ENCODE measurements at regions of chr1 and their contacts with region 1.

Region 1: DNA sequence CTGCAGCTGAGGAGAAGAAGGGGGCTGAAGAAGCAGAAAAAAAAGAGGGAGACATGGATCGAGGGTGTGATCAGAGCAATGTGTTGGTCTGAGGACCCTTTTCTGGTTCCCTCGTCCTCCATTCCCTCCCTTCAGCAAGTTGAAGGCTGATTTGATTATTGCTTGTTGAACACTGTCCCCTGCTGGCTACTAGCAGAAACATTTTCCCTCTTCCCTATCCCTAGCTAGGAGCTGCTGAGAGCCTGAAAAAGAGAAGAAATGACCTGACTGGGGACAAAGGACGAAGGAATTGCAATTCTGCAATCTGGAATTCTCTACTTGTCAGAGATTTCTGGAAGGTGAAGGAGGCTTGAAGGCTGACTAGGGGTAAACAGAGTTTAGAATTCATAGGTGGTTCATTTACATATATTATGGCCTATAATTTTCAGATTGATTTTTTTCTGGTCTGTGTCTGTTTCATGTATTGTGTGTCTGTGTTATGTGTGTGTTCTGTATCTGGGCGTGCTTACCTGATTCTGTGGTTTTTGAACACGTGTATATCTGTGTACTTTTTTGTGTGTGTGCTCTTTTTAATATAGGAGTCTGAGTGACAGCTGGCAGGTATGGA is 9.8 kb downstream of the NHLH1 start:
- DNase-seq: peak in 2 of 10 donors; percentile 53 to 57

Region 2: DNA sequence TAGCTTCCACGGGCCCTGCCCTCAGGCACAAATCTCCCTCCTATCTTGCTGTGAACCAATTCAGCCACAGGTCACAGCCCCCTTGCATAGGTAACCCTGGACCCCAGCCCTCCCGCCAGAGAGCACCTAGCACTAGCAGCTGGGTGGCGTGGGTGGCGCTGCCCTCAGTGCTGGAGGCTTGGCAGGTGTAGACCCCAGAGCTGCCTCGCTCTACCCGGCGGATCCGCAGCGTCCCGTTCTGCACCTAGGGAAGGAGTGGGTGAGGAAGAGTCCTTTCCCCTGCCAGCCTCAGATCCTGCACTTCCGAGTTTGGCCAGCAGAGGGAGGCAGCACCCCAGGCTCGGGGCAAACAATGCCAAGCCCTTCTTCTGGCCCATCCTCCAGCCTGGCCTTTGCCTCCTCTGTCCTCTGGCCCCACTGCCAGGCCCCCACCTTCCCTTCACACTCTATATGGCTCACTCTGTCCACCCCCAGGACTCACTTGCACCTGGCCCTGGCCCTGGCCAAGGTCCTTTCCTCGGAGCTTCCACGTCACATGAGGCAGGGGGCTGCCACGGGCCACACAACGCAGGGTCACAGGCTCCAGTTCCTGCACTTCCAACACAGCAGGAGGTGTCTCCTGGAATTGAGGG is 440.2 kb before region 1 on chr1:
- intact Hi-C with region 1: loop called (anchors 10 kb)
- DNase-seq: peak in 7 of 10 donors; percentile 44 to 93 (median 74)

Region 3: GRCh38 chr1:160101037-160101716 is 275.5 kb before region 1 on chr1:
- intact Hi-C with region 1: loop called (anchors 5 kb)
- DNase-seq: peak; percentile 83 to 98 (median 90)

Region 4: DNA sequence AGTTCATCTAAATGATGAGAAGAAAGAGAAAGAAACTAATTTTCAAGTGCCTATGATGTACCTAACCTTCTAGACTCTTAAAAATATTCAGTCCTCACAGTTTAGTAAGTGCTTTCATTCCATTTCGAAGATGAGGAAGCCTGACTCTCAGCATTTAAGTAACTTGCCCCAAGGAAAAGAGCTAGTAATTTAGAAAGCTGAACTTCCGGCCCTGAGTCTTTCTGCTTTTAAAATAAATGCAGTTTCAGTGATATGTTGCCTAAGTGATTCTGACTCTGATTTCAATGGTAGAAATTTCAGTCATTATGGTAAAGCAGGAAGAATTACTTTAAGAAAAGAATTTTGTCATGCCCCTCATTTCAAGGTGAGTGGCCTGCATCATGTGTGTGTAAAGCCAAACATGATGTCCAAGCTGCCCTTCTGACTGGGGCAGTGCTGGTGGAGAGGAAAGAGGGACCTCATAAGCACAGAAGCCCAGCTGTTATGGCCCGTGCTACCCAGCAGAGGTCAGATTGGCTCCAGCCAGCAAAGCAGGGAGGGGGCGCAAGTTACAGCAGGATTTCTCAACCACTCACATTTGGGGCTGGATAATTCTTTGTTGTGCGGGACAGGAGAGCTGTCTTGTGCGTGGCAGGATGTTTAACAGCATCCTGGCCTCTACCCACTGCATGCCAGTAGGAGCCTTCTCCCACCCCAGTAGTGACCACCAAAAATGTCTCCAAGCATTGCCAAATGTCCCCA is 214.5 kb before region 1 on chr1:
- intact Hi-C with region 1: no loop called
- DNase-seq: peak in 5 of 10 donors; percentile 43 to 87 (median 53)

Region 5: DNA sequence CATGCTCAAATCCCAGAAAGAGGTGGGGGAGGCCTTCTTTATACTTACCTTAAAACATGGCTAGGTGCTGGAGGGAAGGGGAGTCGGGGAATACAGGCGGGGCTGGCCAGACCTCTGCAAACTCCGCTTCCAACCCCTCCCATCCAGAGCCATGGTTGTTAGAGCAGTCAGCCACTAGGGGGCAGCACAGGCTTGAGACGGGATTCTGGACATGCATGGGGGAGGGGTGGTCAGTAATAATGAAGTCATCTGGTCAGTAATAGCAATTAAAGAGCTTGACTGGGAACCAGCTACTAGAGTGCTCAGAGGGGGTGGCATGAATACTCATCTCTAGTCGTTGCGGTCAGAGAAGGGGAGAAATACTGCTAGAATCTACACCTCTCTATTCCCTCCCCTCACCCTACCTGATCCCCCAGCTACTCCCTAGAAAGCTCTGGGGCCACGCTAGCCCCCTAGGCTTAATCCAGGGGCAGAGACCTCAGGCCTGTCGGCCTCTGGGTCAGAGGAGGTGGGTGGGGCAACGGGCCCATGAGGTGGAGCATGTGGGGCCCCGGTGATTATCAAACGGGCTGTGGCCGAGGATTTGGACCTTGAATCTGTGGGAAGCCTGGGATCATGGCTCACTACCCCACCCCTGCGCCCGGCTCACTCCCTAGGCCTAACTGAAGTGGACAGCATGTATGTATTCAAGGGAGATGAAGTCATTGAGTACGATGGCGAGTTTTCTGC is 183.4 kb before region 1 on chr1:
- intact Hi-C with region 1: loop called (anchors 1 kb)
- DNase-seq: peak; percentile 70 to 97 (median 92)

Region 6: DNA sequence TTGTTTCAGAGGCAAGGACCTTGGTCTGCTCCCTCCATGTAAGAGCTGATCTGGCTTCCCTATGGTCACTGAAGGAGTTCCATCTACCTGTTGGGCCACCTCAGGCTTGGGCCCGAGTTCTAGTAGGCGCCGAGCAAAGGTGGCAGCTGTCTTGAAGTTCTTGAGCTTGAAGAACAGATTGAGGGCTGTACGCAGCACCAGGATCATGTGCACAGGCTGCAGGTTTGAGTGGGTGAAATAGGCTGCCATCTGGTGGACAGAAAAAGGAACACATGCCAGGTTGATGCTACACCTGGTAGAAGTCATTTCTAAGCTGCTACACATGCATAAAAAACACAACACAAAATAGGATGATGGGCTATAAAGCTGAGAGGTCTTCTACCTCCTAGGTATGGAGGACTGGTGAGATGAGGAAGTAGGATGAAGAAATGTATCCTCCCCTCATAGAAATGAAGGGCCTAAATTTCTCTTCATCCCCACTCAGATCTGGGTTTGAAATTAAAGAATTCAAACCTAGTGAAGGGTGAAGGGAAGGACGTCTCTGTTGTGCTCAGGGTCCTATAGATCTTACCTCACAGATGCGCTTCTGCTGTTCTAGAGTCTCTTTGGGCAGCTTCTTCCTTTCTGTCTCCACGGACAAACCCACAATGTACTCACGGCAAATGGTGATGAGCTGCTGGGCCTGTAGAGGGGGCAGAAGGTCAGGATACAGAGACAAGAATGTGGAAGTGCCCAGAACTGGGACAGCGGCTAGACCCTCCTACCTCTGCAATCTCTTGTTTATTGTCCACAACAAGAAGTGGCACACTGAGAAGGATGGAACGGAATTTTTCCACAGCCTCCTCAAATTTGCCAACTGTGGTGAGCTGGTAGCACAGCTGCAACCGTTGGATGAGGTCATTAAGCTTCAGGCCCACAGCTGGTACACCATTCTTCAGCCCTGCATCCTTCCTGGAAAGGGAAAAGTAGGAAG is 85.1 kb before region 1 on chr1:
- intact Hi-C with region 1: loop called (anchors 10 kb)
- DNase-seq: peak in 9 of 10 donors; percentile 41 to 95 (median 69)

Measured in posterior cingulate gyrus (tissue), 11 donors.